Activated CD4-positive, alpha-beta memory T cell treated with anti-CD3 and anti-CD28 coated beads for 36 hours (primary cell): ENCODE measurements at regions of chr2 and their contacts with region 1.

Region 1: DNA sequence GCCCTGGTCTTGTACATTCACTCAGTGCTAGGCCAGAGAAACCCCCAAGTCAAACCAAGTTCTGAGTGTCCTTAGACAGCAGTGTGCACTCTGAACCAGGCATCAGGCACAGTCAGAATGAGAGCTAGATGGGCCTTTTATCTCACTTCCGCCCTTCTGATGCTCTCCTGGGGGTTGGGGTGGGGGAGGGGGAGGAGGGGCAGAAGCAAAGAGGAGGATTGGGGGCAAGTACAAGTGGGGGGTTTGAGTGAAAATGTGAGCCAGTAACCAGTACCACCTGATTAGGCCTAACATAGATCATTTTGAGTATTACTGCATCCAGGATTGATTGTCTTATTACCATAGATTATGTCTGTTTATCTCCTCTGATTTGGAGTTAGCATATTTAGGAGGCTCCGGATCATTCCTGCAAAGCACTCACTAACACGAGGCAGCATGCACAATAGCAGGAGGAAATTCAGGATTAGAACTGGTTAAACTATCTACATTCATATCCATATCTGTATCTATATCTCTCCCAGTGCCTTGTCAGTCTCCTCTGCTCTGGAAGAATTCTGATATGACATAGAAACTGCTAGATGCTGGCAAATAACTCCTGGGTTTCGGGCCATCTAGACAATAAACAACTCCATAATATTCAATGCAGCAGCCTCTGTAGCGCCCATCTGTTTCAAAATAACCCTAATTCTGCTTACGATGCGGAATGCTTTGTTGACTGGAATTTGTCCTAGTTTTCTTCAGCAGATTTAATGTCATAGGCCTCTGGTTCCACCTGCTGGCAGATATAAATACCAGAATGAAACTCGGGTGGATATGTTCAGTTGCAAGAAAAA is 149.1 kb downstream of the RHBDD1 start:
- DNase-seq: peak; percentile 31
- H3K4me3 Mint-ChIP-seq: no peak overlapping the region
- H3K27ac Mint-ChIP-seq: no peak overlapping the region
- H3K4me1 Mint-ChIP-seq: peaks cover 20% of the 10 kb centered on the region
- H3K27me3 Mint-ChIP-seq: no peaks in the 10 kb centered on the region

Region 2: GRCh38 chr2:225889446-225889850 is 1095.5 kb before region 1 on chr2:
- CTCF ChIA-PET with region 1: no interaction called
- POLR2A ChIA-PET with region 1: no interaction called
- intact Hi-C with region 1: loop called (anchors 2 kb)
- DNase-seq: no peak
- H3K4me3 Mint-ChIP-seq: no peak overlapping the region
- H3K27ac Mint-ChIP-seq: no peak overlapping the region
- H3K4me1 Mint-ChIP-seq: no peaks in the 10 kb centered on the region
- H3K27me3 Mint-ChIP-seq: peaks cover 4% of the 10 kb centered on the region

Region 3: GRCh38 chr2:226215902-226216503 is 769.0 kb before region 1 on chr2:
- CTCF ChIA-PET with region 1: no interaction called
- POLR2A ChIA-PET with region 1: no interaction called
- intact Hi-C with region 1: loop called (anchors 1 kb)
- DNase-seq: peak; percentile 71
- H3K4me3 Mint-ChIP-seq: no peak overlapping the region
- H3K27ac Mint-ChIP-seq: no peak overlapping the region
- H3K4me1 Mint-ChIP-seq: no peaks in the 10 kb centered on the region
- H3K27me3 Mint-ChIP-seq: no peaks in the 10 kb centered on the region

Region 4: GRCh38 chr2:226690461-226691024 is 294.4 kb before region 1 on chr2:
- CTCF ChIA-PET with region 1: no interaction called
- POLR2A ChIA-PET with region 1: no interaction called
- intact Hi-C with region 1: no loop called
- DNase-seq: no peak
- H3K4me3 Mint-ChIP-seq: no peak overlapping the region
- H3K27ac Mint-ChIP-seq: no peak overlapping the region
- H3K4me1 Mint-ChIP-seq: peaks cover 2% of the 10 kb centered on the region
- H3K27me3 Mint-ChIP-seq: peaks cover 30% of the 10 kb centered on the region

Region 5: GRCh38 chr2:226813148-226813701 is 171.7 kb before region 1 on chr2:
- CTCF ChIA-PET with region 1: no interaction called
- POLR2A ChIA-PET with region 1: no interaction called
- intact Hi-C with region 1: loop called (anchors 1 kb)
- DNase-seq: no peak
- H3K4me3 Mint-ChIP-seq: no peak overlapping the region
- H3K27ac Mint-ChIP-seq: no peak overlapping the region
- H3K4me1 Mint-ChIP-seq: no peaks in the 10 kb centered on the region
- H3K27me3 Mint-ChIP-seq: peaks cover 17% of the 10 kb centered on the region

Region 6: GRCh38 chr2:226906163-226906693 is 78.7 kb before region 1 on chr2:
- CTCF ChIA-PET with region 1: no interaction called
- POLR2A ChIA-PET with region 1: no interaction called
- intact Hi-C with region 1: loop called (anchors 10 kb)
- DNase-seq: no peak
- H3K4me3 Mint-ChIP-seq: no peak overlapping the region
- H3K27ac Mint-ChIP-seq: no peak overlapping the region
- H3K4me1 Mint-ChIP-seq: peaks cover 26% of the 10 kb centered on the region
- H3K27me3 Mint-ChIP-seq: no peaks in the 10 kb centered on the region

Region 7: DNA sequence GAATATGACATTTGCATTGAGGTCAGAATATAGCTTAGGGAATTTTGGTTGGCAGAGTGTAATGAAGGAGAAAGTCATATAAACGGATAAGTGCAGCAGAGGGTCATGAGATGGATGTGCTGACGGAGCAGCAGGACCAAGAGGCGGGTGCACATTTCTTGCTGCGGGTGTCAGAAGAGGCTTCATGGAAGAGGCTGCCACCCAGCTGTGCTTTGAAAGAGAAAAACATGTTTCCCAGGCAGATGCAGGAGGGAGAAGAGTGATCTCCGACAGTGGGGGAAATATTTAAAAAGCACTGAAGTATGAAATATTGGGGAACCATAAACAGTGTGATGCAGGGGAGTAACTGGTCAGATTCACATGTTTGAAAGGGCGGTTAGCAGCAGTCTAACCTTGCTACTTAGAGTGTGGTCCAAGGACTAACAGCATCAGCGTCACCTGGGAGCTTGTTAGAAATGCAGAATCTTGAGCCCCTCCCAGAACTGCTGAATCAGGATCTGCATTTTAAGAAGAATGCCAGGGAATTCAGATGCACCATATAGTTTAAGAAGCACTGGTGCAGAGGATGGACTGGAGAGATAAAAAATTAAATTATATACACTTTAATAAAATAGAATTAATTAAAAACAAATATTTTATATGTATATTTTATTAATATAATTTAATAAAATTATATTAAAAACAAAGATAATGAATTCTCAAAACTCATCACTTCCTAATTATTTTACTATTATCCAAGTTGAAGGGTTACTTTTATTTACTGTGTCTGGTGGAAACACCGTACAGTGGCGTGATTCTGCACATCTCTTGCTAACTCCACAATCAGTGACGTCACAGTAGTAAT is 438.9 kb after region 1 on chr2:
- CTCF ChIA-PET with region 1: no interaction called
- POLR2A ChIA-PET with region 1: no interaction called
- intact Hi-C with region 1: no loop called
- DNase-seq: no peak
- H3K4me3 Mint-ChIP-seq: no peak overlapping the region
- H3K27ac Mint-ChIP-seq: no peak overlapping the region
- H3K4me1 Mint-ChIP-seq: peaks cover 5% of the 10 kb centered on the region
- H3K27me3 Mint-ChIP-seq: no peaks in the 10 kb centered on the region